Left ventricle myocardium inferior (tissue), 1 donor: ENCODE measurements at regions of chr10 and their contacts with region 1.

Region 1: GRCh38 chr10:102752934-102753664 is 9.4 kb downstream of the WBP1L start:
- DNase-seq: no peak
- H3K4me3 ChIP-seq: no peak overlapping the region
- H3K27ac ChIP-seq: peak overlapping the region; percentile 58
- H3K4me1 ChIP-seq: peaks cover 30% of the 10 kb centered on the region
- H3K27me3 ChIP-seq: no peaks in the 10 kb centered on the region
- CTCF ChIP-seq: peak; percentile 70

Region 2: DNA sequence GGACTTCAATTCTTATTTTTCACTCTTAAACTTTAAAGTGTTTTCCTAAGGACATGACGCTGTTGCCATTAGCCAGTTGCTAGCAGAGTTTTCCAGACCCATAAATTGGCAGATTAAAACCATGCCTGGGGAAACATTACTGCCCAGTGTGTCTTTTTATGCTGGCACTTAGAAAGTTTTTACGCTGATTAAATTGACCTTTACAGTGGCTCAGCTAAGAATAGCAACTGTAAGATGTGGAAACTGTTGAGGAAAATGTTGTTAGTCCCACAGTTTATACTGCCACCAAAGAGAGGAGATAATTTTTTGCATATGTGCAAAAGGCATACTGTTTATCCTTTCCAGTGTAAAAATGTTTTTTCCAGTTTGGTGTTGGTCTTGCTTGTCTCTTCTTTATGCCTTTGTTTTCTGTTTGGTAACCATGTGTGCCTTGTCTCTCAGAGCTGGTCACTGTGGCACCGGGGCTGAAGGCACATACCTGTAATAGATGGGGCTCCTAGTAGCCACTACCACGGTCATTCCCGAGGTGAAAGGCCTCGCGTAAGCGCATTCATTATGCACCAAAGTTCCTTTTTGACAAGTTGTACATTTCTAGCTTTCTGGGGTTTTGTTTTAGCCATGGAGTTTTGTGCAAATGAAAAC is 38.8 kb after region 1 on chr10:
- intact Hi-C with region 1: no loop called
- DNase-seq: no peak
- H3K4me3 ChIP-seq: no peak overlapping the region
- H3K27ac ChIP-seq: peak overlapping the region; percentile 89
- H3K4me1 ChIP-seq: peaks cover 99% of the 10 kb centered on the region
- H3K27me3 ChIP-seq: no peaks in the 10 kb centered on the region
- CTCF ChIP-seq: no peak

Region 3: GRCh38 chr10:102802920-102803534 is 49.9 kb after region 1 on chr10:
- intact Hi-C with region 1: loop called (anchors 10 kb)
- DNase-seq: no peak
- H3K4me3 ChIP-seq: no peak overlapping the region
- H3K27ac ChIP-seq: peak overlapping the region; percentile 79
- H3K4me1 ChIP-seq: peaks cover 73% of the 10 kb centered on the region
- H3K27me3 ChIP-seq: no peaks in the 10 kb centered on the region
- CTCF ChIP-seq: no peak